ENCODE measurements at regions of chr5 and their contacts with region 1.

Region 1: DNA sequence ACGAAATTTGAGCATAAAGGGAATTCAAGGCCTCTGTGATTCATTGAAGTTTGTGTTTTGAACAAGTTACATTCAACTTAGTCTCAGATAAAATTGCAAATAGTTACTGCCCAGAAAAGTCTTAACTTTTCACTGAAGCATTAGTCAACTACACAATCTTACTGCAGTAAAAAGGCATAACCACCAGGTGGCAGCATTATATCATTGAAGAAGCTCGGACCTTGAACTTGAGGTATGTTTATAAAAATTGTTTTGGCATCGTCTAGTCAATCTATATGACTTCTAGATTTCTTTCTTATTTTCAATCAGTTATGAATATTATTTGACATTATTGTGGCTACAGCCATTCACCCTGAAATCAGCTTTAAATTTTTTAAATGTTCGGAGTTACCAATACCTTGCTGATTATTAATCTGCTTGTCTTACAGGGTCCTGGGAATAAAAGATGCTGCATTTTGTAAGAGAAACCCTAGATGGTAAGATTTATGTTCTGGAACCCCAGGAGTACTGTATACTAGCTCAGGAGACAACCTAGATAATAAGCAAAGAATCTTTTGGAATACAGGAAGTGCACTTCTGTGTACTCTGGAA is 83.9 kb upstream of the GRAMD2B start:
- DNase-seq: peak; percentile 25 to 56 (median 46)
- H3K4me3 ChIP-seq: no peak overlapping the region
- H3K4me3 Mint-ChIP-seq: no peak overlapping the region
- H3K27ac ChIP-seq: no peak overlapping the region
- H3K27ac Mint-ChIP-seq: no peak overlapping the region
- H3K4me1 ChIP-seq: no peaks in the 10 kb centered on the region
- H3K4me1 Mint-ChIP-seq: no peaks in the 10 kb centered on the region
- H3K27me3 ChIP-seq: peaks cover 5 to 9% of the 10 kb centered on the region in 2 donors
- H3K27me3 Mint-ChIP-seq: peaks cover 4 to 7% (median 6%) of the 10 kb centered on the region in 3 donors
- CTCF ChIP-seq: peak; percentile 87

Region 2: DNA sequence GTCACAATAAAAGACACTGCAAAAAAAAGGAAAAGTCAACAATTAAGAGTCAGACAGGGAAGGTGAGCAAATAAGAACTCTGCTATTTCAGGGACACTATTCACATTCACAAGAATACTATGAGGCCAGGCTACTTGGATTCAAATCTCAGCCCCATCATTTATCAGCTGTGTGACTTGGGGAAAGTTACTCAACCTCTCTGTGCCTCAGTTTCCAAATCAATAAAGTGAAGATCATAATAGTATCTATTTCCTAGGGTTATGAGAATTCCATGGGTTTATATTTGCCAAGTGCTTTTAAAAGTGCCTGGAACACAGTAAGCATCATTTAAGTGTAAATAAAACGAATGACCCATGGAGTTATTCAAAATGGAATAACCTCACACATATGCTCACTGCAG is 199.3 kb after region 1 on chr5:
- intact Hi-C with region 1: loop called (anchors 1 to 2 kb)
- DNase-seq: no peak
- H3K4me3 ChIP-seq: no peak overlapping the region
- H3K4me3 Mint-ChIP-seq: no peak overlapping the region
- H3K27ac ChIP-seq: no peak overlapping the region
- H3K27ac Mint-ChIP-seq: no peak overlapping the region
- H3K4me1 ChIP-seq: no peaks in the 10 kb centered on the region
- H3K4me1 Mint-ChIP-seq: peaks cover 7% of the 10 kb centered on the region
- H3K27me3 ChIP-seq: no peaks in the 10 kb centered on the region
- H3K27me3 Mint-ChIP-seq: peaks cover 3% of the 10 kb centered on the region in 3 donors
- CTCF ChIP-seq: no peak

Region 3: GRCh38 chr5:126544087-126544740 is 204.9 kb after region 1 on chr5:
- intact Hi-C with region 1: loop called (anchors 1 to 2 kb)
- DNase-seq: no peak
- H3K4me3 ChIP-seq: no peak overlapping the region
- H3K4me3 Mint-ChIP-seq: no peak overlapping the region
- H3K27ac ChIP-seq: no peak overlapping the region
- H3K27ac Mint-ChIP-seq: no peak overlapping the region
- H3K4me1 ChIP-seq: no peaks in the 10 kb centered on the region
- H3K4me1 Mint-ChIP-seq: peaks cover 7% of the 10 kb centered on the region
- H3K27me3 ChIP-seq: no peaks in the 10 kb centered on the region
- H3K27me3 Mint-ChIP-seq: peaks cover 0 to 3% (median 0%) of the 10 kb centered on the region in 3 donors
- CTCF ChIP-seq: peak; percentile 32